ENCODE measurements at regions of chr9 and their contacts with region 1.

Region 1: DNA sequence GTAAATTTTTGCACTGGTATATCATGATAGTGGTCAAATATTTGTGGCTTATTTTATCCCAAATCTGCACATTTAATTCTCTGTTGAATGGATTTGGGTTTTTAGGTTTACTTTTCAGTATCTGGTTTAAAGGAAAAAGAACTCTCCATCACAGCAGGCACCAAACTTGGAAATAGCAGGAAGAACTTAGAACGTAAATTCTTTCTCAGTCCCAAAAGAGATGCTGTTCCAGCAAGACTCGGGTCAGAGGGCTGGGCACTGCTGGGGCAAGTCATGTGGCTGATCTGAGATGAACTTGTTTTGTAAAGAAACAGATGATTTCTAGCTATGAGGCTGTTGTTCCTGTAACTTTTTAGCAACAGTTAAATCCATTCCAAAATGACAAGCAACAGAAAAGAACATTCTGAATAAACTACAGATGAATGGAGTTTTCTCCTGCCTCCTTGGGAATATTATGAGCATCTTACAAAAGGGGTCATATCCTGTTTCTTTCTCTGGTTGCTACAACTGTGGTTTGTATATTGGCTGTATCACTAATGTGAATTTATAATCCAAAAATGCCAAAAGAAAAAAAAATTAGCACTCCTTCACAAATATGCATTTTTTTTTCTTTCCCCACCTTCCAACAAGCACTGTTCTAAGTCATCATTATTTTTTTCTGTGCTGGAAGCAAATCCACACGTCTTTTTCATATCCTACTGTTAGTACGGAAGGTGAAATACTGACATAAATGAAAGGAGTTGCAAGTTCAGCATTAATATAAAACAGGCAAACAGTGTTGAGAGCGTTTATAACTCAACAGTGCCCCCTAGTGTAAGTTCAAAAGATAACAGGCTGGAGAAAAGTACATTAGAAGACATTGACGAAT is 31.1 kb downstream of the OR2K2 start:
- DNase-seq: peak; percentile 34
- CTCF ChIP-seq: peak; percentile 68

Region 2: DNA sequence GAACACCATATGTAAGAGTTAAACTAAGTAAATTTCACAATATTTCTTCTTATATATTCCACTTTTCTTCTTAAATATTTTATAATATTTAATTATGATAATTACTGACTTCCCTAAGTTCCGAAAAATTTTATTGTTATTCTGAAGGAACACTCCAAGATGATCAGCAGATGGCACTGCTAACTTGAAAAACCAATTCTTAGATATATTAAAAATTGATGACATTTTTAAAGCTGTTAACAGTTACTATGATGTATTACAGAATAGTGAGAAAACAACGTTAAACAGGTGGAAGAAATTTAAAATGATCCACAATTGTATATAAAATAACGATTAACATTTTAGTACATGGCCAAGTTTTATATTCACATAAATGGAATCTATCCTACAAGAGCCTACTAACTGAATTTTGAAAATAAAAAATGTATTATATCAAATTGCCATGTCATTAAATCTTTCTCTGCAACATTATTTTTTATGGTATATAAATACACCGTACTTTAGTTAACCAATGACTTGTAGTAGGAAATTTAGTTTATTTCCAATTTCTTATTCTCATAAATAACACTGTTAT is 660.5 kb before region 1 on chr9:
- in situ Hi-C with region 1: loop called (anchors 10 kb)
- DNase-seq: peak; percentile 2
- CTCF ChIP-seq: peak; percentile 27

Region 3: DNA sequence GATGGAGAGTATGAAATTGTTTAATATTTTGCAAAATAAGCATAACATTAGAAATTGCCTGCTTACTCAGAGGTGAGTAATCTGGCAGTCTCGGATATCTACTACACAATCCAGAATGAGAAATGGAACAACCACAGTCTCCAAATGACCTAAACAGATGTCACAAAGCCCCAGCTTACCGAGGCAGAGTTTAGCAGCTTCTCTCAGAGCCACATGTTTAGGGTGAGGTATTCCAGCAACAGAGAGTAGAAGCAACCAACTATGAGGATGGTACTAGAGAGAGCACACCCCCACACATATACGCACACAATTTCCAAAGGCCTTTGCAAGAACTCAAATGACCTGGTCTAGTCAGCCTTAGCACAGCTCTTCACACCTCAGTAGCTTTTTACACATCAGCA is 137.9 kb before region 1 on chr9:
- in situ Hi-C with region 1: no loop called
- DNase-seq: no peak
- CTCF ChIP-seq: no peak